Endothelial cell of umbilical vein (primary cell): ENCODE measurements at regions of chrX and their contacts with region 1.

Region 1: GRCh38 chrX:10083809-10084208 is 73.0 kb upstream of the CLCN4 start:
- DNase-seq: peak; percentile 17
- H3K4me3 ChIP-seq: no peak overlapping the region
- H3K27ac ChIP-seq: peak overlapping the region; percentile 55
- H3K4me1 ChIP-seq: peaks cover 41% of the 10 kb centered on the region
- H3K27me3 ChIP-seq: no peaks in the 10 kb centered on the region
- CTCF ChIP-seq: no peak
- POLR2A ChIP-seq: no peak

Region 2: GRCh38 chrX:10022580-10023245 is 61.1 kb before region 1 on chrX:
- CTCF ChIA-PET with region 1: interaction called, 3 read pairs
- POLR2A ChIA-PET with region 1: no interaction called
- dilution Hi-C with region 1: no loop called
- intact Hi-C with region 1: loop called (anchors 2 kb)
- DNase-seq: peak; percentile 83
- H3K4me3 ChIP-seq: peak overlapping the region in 1 of 3 experiments; percentile 2
- H3K27ac ChIP-seq: peak overlapping the region; percentile 80
- H3K4me1 ChIP-seq: peaks cover 52% of the 10 kb centered on the region
- H3K27me3 ChIP-seq: no peaks in the 10 kb centered on the region
- CTCF ChIP-seq: no peak
- POLR2A ChIP-seq: peak; percentile 37

Region 3: GRCh38 chrX:10549280-10549679 is 465.5 kb after region 1 on chrX:
- CTCF ChIA-PET with region 1: no interaction called
- POLR2A ChIA-PET with region 1: no interaction called
- dilution Hi-C with region 1: no loop called
- intact Hi-C with region 1: no loop called
- DNase-seq: peak; percentile 43
- H3K4me3 ChIP-seq: no peak overlapping the region
- H3K27ac ChIP-seq: no peak overlapping the region
- H3K4me1 ChIP-seq: peaks cover 7% of the 10 kb centered on the region
- H3K27me3 ChIP-seq: no peaks in the 10 kb centered on the region
- CTCF ChIP-seq: no peak
- POLR2A ChIP-seq: no peak